ENCODE measurements at regions of chr9 and their contacts with region 1.

Region 1: GRCh38 chr9:111909441-111909840 is 12.8 kb downstream of the UGCG start:
- DNase-seq: peak in 1 of 4 experiments; percentile 16
- ATAC-seq: peak; percentile 45
- H3K4me3 ChIP-seq: no peak overlapping the region
- H3K27ac ChIP-seq: no peak overlapping the region
- H3K4me1 ChIP-seq: peaks cover 11 to 24% of the 10 kb centered on the region in 2 experiments; a peak in 3 of 5 replicates
- H3K27me3 ChIP-seq: no peaks in the 10 kb centered on the region
- CTCF ChIP-seq: no peak
- EP300 ChIP-seq: no peak
- POLR2A ChIP-seq: no peak
- RAD21 ChIP-seq: no peak

Region 2: DNA sequence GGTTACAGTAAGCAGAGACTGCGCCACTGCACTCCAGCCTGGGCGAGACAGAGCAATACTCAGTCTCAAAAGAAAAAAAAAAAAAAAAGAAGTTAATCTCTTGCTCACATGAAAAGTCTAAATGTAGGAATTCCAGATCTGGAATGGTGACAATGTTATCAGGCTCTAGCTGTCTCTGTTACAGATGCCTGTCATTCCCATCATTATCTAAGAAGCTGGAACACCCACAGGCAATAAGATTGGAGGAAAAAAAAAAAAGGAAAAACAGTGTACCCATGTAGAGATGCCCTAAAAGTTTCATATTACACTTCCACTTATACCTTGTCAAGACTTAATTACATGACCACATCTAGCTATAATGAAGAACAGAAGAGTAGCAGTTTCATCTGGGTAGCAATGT is 385.7 kb after region 1 on chr9:
- CTCF ChIA-PET with region 1: no interaction called
- POLR2A ChIA-PET with region 1: no interaction called
- in situ Hi-C with region 1: no loop called
- intact Hi-C with region 1: no loop called
- DNase-seq: no peak
- ATAC-seq: no peak
- H3K4me3 ChIP-seq: no peak overlapping the region
- H3K27ac ChIP-seq: no peak overlapping the region
- H3K4me1 ChIP-seq: no peaks in the 10 kb centered on the region; a peak in 1 of 5 replicates
- H3K27me3 ChIP-seq: no peaks in the 10 kb centered on the region
- CTCF ChIP-seq: no peak
- EP300 ChIP-seq: no peak
- POLR2A ChIP-seq: no peak
- RAD21 ChIP-seq: no peak

Region 3: GRCh38 chr9:112355427-112355897 is 446.0 kb after region 1 on chr9:
- CTCF ChIA-PET with region 1: no interaction called
- POLR2A ChIA-PET with region 1: no interaction called
- in situ Hi-C with region 1: no loop called
- intact Hi-C with region 1: loop called (anchors 10 kb)
- DNase-seq: no peak
- ATAC-seq: peak; percentile 53; the same call in 2 of the 3 replicates
- H3K4me3 ChIP-seq: no peak overlapping the region
- H3K27ac ChIP-seq: no peak overlapping the region
- H3K4me1 ChIP-seq: no peaks in the 10 kb centered on the region
- H3K27me3 ChIP-seq: no peaks in the 10 kb centered on the region
- CTCF ChIP-seq: no peak
- EP300 ChIP-seq: no peak
- POLR2A ChIP-seq: no peak
- RAD21 ChIP-seq: no peak